ENCODE measurements at regions of chr6 and their contacts with region 1.

Region 1: GRCh38 chr6:44338228-44339122 is 4.0 kb upstream of the SPATS1 start:
- DNase-seq: no peak
- H3K4me3 ChIP-seq: no peak overlapping the region
- H3K27ac ChIP-seq: peak overlapping the region; percentile 42 to 72 (median 49)
- H3K4me1 ChIP-seq: peaks cover 5 to 28% (median 19%) of the 10 kb centered on the region in 4 donors
- H3K27me3 ChIP-seq: peaks cover 0 to 34% (median 2%) of the 10 kb centered on the region in 4 donors
- CTCF ChIP-seq: peak; percentile 71 to 80 (median 74)
- EP300 ChIP-seq: no peak
- POLR2A ChIP-seq: no peak

Region 2: DNA sequence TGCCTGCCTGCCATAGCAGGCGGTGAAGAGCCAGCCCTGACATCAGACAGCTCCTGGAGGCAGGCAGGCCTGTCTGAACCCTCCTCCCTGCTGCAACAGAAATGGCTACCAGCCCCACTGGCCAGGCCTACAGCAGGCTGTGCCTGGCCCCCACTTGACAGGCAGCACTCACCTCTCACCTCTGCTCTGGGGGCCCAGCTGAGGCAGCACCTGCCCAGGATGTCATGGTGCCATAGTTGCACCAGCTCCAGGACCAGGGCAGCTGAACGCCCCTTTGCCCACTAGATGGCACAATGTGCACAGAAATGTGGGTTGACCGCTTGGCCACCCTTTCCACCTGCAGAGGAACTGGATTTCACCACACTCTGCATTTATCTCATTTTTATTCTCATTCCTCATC is 241.9 kb before region 1 on chr6:
- intact Hi-C with region 1: loop called (anchors 10 kb)
- DNase-seq: no peak
- H3K4me3 ChIP-seq: no peak overlapping the region
- H3K27ac ChIP-seq: no peak overlapping the region
- H3K4me1 ChIP-seq: peaks cover 0 to 4% (median 0%) of the 10 kb centered on the region in 4 donors
- H3K27me3 ChIP-seq: no peaks in the 10 kb centered on the region
- CTCF ChIP-seq: peak; percentile 81 to 91 (median 86)
- EP300 ChIP-seq: no peak
- POLR2A ChIP-seq: no peak

Region 3: DNA sequence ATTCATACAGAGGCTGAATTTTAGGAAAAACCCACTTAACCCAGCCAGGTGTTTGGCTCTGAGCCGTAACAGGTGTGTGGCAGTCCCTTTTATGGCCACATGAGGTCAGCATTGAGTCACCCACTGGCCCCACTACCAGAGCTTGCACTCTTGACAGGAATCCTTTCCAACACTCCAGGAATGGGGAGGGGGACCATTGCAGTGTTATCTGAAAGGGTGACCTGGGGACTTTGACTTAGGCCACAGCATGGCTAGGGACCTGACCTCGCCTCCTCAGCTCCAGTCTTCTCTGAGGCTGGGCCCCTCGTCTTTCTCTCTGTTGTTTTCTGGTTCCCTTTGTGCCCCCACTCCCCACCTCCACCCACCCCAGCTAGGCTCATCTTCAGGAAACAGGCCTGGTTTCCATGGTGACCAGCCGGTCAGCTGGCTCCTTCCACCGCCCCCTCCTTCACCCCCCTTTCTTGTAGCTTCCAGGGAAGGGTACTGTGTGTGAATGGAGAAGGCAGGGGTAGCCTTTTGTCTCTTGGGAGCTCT is 70.3 kb before region 1 on chr6:
- intact Hi-C with region 1: loop called (anchors 1 kb)
- DNase-seq: no peak
- H3K4me3 ChIP-seq: no peak overlapping the region
- H3K27ac ChIP-seq: no peak overlapping the region
- H3K4me1 ChIP-seq: peaks cover 22 to 42% (median 34%) of the 10 kb centered on the region in 4 donors
- H3K27me3 ChIP-seq: peaks cover 4 to 53% (median 33%) of the 10 kb centered on the region in 4 donors
- CTCF ChIP-seq: peak; percentile 87 to 95 (median 89)
- EP300 ChIP-seq: no peak
- POLR2A ChIP-seq: no peak

Region 4: GRCh38 chr6:44494011-44494501 is 155.6 kb after region 1 on chr6:
- intact Hi-C with region 1: no loop called
- DNase-seq: no peak
- H3K4me3 ChIP-seq: no peak overlapping the region
- H3K27ac ChIP-seq: no peak overlapping the region
- H3K4me1 ChIP-seq: peaks cover 11 to 17% (median 16%) of the 10 kb centered on the region in 4 donors
- H3K27me3 ChIP-seq: peaks cover 0 to 41% (median 2%) of the 10 kb centered on the region in 4 donors
- CTCF ChIP-seq: no peak
- EP300 ChIP-seq: no peak
- POLR2A ChIP-seq: no peak